ENCODE measurements at regions of chr7 and their contacts with region 1.

Region 1: DNA sequence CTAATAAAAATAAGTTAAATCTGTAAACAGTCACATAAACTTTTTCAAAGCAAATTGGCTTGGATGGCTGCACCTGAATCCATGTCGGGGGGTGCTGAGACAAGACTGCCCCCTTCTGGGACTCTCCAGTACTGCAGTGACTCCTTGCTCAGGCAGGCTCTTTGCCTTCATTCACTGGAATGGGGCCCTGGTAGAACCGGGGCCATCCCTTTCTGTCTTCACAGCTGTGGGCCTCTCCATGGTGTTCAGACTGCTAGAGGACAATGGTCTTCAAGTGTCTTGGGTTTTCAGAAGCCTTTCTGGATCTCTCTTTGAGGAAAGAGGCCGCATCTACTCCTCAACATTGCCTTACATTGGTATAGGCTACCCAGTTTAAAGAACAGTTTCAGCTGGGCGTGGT is 16.1 kb upstream of the IMPDH1 start:
- DNase-seq: peak; percentile 95
- H3K4me3 Mint-ChIP-seq: no peak overlapping the region
- H3K27ac Mint-ChIP-seq: no peak overlapping the region
- H3K4me1 Mint-ChIP-seq: peaks cover 20% of the 10 kb centered on the region
- H3K27me3 Mint-ChIP-seq: peaks cover 4% of the 10 kb centered on the region

Region 2: DNA sequence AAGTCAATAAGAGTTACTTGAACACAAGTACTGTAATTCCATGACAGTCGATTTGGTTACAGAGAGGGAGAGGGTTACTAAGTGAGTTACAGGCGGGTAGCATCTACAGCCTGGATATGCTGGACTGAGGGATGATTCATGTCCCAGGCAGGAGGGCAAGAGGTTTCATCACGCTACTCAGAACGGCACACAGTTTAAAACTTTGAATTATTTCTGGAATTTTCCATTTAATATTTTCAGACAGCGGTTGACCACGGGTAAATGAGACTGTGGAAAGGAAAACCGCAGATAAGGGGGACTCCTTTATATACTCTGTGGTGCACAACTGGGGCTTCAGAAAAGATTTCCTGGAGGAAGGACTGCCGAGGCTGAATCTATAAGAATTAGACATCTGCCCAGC is 368.9 kb before region 1 on chr7:
- intact Hi-C with region 1: no loop called
- DNase-seq: no peak
- H3K4me3 Mint-ChIP-seq: no peak overlapping the region
- H3K27ac Mint-ChIP-seq: no peak overlapping the region
- H3K4me1 Mint-ChIP-seq: peaks cover 31% of the 10 kb centered on the region
- H3K27me3 Mint-ChIP-seq: no peaks in the 10 kb centered on the region

Region 3: DNA sequence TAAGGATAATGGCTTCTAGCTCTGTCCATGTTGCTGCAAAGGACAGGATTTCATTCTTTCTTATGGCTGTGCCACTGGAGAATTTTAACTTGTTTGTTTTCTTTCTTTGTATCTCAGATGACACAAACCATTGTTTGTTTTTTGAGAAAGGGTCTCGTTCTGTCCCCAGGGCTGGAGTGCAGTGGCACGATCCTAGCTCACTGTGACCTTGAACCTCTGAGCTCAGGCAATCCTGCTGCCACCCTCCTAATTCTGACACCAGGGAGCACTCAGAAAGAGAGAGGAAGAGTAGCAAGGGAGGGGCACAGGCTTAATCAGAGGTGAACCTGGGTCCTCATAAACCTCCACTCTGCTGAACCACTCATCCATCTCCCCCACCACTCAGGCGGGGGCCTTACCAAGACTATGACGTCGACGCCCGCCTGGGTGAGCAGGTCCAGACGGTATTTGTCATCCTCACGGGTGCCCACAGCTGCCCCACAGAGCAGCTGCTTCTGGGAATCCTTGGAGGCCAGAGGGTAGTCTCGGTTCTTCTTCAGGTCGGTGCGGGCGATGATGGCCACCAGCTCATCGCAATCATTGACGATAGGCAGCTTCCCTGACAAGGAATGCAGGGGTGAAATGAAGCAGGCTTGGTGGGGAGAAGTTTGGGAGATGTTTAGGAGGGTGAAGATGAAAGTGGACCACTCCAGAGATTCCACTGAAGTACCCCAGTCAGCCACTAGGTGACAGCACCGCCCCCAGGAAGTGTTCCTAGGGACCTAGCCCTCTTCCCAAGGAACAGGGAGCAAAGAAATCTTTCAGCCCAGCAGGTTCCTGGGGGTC is 27.6 kb before region 1 on chr7:
- intact Hi-C with region 1: loop called (anchors 1 kb)
- DNase-seq: peak; percentile 81
- H3K4me3 Mint-ChIP-seq: no peak overlapping the region
- H3K27ac Mint-ChIP-seq: no peak overlapping the region
- H3K4me1 Mint-ChIP-seq: no peaks in the 10 kb centered on the region
- H3K27me3 Mint-ChIP-seq: no peaks in the 10 kb centered on the region

Measured in activated CD4-positive, alpha-beta T cell treated with anti-CD3 and anti-CD28 coated beads, Interleukin-2, amount 10 ng/mL, durations not matched to agents 24 days and 14 days (primary cell).